ENCODE measurements at regions of chr7 and their contacts with region 1.

Region 1: DNA sequence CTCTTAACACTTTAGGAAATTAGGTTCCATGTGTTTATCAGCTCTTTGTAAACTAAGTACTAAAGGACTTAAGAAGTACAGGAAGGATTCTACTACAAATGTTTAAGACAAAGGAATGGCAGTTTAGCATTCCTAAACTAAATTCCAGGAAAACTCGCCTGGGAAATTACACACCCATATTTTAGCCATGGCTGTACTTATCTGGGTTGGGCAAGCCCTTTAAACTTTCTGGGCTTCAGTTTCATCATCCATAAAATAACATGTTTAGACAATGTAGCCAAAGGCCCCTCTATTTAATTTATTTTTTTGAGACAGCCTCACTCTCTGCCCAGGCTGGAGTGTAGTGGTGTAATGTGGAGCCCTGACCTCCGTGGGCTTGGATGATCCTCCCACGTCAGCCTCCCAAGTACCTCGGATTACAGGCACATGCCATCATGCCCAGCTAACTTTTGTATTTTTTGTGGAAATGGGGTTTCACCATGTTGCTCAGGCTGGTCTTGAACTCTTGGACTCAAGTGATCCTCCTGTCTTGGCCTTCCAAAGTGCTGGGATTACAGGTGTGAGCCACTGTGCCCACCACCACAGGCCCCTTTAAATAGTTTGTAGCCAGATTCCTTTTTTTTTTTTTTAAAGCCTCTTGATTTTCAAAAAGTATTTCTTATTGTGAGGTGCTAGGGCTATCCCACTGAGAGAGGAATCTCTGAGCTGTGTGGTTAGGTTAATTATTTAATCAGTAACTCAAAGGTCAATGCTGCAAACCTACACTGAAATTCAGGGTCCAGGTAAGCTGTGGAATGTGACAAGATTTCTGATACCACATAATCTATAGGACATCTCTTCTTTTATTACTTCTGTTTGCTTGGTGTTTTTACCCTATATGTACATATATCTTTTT is 32.1 kb downstream of the TMEM60 start:
- DNase-seq: no peak
- ATAC-seq: no peak
- H3K4me3 ChIP-seq: no peak overlapping the region
- H3K4me3 Mint-ChIP-seq: no peak overlapping the region
- H3K27ac ChIP-seq: no peak overlapping the region
- H3K27ac Mint-ChIP-seq: no peak overlapping the region
- H3K4me1 ChIP-seq: no peaks in the 10 kb centered on the region
- H3K4me1 Mint-ChIP-seq: peaks cover 33% of the 10 kb centered on the region
- H3K27me3 ChIP-seq: no peaks in the 10 kb centered on the region
- H3K27me3 Mint-ChIP-seq: no peaks in the 10 kb centered on the region
- CTCF ChIP-seq: no peak

Region 2: GRCh38 chr7:77542409-77542808 is 223.7 kb before region 1 on chr7:
- CTCF ChIA-PET with region 1: no interaction called
- POLR2A ChIA-PET with region 1: no interaction called
- intact Hi-C with region 1: loop called in 1 of 2 experiments (anchors 10 kb)
- DNase-seq: no peak
- ATAC-seq: no peak
- H3K4me3 ChIP-seq: no peak overlapping the region
- H3K4me3 Mint-ChIP-seq: no peak overlapping the region
- H3K27ac ChIP-seq: peak overlapping the region in 1 of 2 experiments; percentile 26
- H3K27ac Mint-ChIP-seq: peak overlapping the region; percentile 2
- H3K4me1 ChIP-seq: peaks cover 13% of the 10 kb centered on the region
- H3K4me1 Mint-ChIP-seq: peaks cover 51% of the 10 kb centered on the region
- H3K27me3 ChIP-seq: no peaks in the 10 kb centered on the region
- H3K27me3 Mint-ChIP-seq: no peaks in the 10 kb centered on the region
- CTCF ChIP-seq: no peak

Region 3: DNA sequence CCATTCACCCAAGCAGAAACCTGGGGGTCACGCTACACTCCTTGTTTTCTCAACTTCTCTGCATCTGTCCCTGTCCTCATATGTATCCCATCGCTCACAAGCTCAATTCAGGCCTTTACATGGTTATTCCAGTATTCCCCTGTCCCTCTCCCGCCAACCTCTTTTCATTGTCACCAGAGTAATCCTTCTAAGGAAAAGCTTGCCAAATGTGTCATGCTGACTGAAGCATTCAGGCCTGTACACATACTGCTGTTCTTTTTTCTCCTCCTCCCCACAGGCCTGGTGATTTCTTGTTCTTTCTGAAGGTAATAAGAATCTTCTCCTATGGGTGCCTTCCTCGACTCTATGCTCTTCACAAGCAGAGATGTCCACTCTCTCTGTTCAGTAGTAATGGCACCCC is 314.7 kb after region 1 on chr7:
- CTCF ChIA-PET with region 1: no interaction called
- POLR2A ChIA-PET with region 1: no interaction called
- intact Hi-C with region 1: no loop called
- DNase-seq: no peak
- ATAC-seq: no peak
- H3K4me3 ChIP-seq: no peak overlapping the region
- H3K4me3 Mint-ChIP-seq: no peak overlapping the region
- H3K27ac ChIP-seq: no peak overlapping the region
- H3K27ac Mint-ChIP-seq: no peak overlapping the region
- H3K4me1 ChIP-seq: no peaks in the 10 kb centered on the region
- H3K4me1 Mint-ChIP-seq: no peaks in the 10 kb centered on the region
- H3K27me3 ChIP-seq: no peaks in the 10 kb centered on the region
- H3K27me3 Mint-ChIP-seq: peaks cover 16% of the 10 kb centered on the region
- CTCF ChIP-seq: no peak

Region 4: DNA sequence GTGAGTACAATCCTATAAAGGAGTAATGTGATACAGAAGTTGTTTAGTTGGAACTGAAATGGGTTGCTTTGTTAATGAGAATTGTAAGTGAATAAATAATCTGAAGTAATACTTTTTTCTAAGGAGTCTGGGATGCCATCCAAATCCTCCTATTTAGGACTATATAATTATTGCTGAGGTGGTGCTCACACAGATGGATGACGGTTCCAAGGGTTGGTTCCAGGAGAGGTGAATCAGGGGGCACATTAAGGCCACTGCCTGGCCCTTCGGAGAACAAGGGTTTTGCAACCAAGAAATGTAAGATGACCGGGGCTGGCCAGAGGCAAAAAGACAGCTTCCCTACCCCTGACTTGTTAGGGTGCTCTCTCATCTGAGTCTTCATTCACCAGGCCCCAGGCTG is 385.1 kb after region 1 on chr7:
- CTCF ChIA-PET with region 1: no interaction called
- POLR2A ChIA-PET with region 1: no interaction called
- intact Hi-C with region 1: no loop called
- DNase-seq: no peak
- ATAC-seq: no peak
- H3K4me3 ChIP-seq: no peak overlapping the region
- H3K4me3 Mint-ChIP-seq: no peak overlapping the region
- H3K27ac ChIP-seq: no peak overlapping the region
- H3K27ac Mint-ChIP-seq: no peak overlapping the region
- H3K4me1 ChIP-seq: no peaks in the 10 kb centered on the region
- H3K4me1 Mint-ChIP-seq: no peaks in the 10 kb centered on the region
- H3K27me3 ChIP-seq: no peaks in the 10 kb centered on the region
- H3K27me3 Mint-ChIP-seq: peaks cover 2% of the 10 kb centered on the region
- CTCF ChIP-seq: no peak